Ovary (tissue), 10 donors: ENCODE measurements at regions of chr1 and their contacts with region 1.

Region 1: DNA sequence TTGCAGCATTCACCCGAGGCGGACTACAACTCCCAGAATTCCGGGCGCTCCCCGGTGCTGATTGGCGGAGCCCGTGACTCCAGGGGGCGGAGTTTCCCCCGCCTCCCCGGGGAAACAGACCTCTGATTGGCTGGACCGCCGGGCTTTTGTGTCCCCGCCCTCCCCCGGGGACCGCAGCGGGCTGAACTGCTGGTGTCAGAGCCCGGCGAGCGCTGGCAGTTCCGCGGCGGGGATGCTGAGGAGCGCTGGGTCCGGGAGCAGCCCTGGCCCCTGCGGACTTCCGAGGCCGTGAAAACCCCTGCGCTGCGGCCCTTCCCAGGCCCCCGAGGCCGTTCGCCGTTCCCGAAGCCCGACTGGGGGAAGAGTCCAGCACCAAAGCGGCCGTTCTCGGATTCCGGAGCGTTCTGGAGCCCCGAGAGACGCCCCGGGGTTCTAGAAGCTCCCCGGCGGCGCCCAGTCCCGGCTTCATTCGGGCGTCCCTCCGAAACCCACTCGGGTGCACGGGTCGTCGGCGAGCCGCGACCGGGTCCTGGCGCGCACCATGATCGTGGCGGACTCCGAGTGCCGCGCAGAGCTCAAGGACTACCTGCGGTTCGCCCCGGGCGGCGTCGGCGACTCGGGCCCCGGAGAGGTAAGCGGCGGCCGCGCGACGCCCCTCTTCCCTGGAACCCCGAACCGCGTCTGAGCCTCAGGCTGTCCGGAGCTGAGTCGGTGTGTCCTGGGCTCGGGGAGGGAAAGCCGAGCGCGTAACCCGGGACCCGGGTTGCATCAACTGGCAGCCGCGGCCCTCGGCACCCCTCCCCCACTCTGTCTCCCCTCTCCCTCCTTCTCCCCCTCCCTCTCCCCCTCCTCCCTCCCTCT is at the start of gene SESN2:
- DNase-seq: peak; percentile 99 to 100 (median 99)
- H3K4me3 ChIP-seq: peak within 1 kb of the TSS; percentile 99
- H3K27ac ChIP-seq: peak within 1 kb of the TSS; percentile 85 to 89
- H3K4me1 ChIP-seq: peaks cover 11% of the 10 kb centered on the region
- H3K27me3 ChIP-seq: no peaks in the 10 kb centered on the region
- CTCF ChIP-seq: no peak
- EP300 ChIP-seq: peak; percentile 10
- POLR2A ChIP-seq: peak; percentile 99
- total RNA-seq, gene SESN2: 17.8 to 79.9 (median 29.1) TPM

Region 2: GRCh38 chr1:28064064-28064463 is 195.5 kb before region 1 on chr1:
- intact Hi-C with region 1: no loop called
- DNase-seq: no peak
- H3K4me3 ChIP-seq: no peak overlapping the region
- H3K27ac ChIP-seq: no peak overlapping the region
- H3K4me1 ChIP-seq: no peaks in the 10 kb centered on the region
- H3K27me3 ChIP-seq: no peaks in the 10 kb centered on the region
- CTCF ChIP-seq: no peak
- EP300 ChIP-seq: no peak
- POLR2A ChIP-seq: no peak

Region 3: GRCh38 chr1:28074892-28075511 is 184.5 kb before region 1 on chr1:
- intact Hi-C with region 1: no loop called
- DNase-seq: no peak
- H3K4me3 ChIP-seq: no peak overlapping the region
- H3K27ac ChIP-seq: no peak overlapping the region
- H3K4me1 ChIP-seq: no peaks in the 10 kb centered on the region
- H3K27me3 ChIP-seq: no peaks in the 10 kb centered on the region
- CTCF ChIP-seq: no peak
- EP300 ChIP-seq: no peak
- POLR2A ChIP-seq: no peak

Region 4: DNA sequence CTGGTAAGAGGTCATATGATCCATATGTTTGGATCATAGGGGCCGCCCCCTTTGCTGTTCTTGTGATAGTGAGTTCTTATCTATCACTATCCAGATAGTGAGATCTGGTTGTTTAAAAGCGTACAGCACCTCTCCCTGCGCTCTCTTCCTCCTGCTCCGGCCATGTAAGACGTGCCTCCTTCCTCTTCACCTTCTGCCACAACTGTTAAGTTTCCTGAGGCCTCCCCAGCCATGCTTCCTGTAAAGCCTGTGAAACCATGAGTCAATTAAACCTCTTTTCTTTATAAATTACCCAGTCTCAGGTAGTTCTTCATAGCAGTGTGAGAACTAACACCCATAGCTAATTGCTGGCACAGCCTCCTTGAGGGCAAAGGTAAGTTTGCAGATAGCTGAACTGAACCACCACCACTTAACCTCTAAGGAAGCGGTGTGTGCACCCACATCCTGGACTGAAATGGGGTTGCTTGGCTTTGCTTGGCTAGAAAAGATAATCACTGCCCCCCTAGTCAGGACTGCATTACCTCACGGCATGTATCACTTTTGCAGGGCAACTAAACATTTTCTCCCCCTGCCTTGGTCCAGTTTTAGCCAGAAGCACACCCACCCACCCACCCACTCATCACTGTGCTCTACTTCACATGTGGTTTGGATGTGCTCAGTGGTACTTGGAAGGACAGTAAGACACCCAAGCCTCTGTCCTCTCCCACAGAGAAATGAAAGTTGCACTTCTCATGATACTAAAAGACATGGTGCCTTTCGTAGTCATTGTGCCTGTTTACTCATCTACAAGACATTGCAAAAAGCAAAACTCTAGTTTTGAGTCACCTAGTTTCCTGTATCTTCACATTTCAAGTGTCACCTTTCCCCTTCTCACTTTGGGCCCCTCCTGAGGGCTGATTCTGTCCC is 60.0 kb before region 1 on chr1:
- intact Hi-C with region 1: no loop called
- DNase-seq: no peak
- H3K4me3 ChIP-seq: no peak overlapping the region
- H3K27ac ChIP-seq: no peak overlapping the region
- H3K4me1 ChIP-seq: no peaks in the 10 kb centered on the region
- H3K27me3 ChIP-seq: no peaks in the 10 kb centered on the region
- CTCF ChIP-seq: no peak
- EP300 ChIP-seq: no peak
- POLR2A ChIP-seq: no peak

Region 5: GRCh38 chr1:28282426-28283407 is 23.2 kb after region 1 on chr1:
- intact Hi-C with region 1: loop called in 1 of 4 experiments (anchors 2 kb)
- DNase-seq: no peak
- H3K4me3 ChIP-seq: no peak overlapping the region
- H3K27ac ChIP-seq: no peak overlapping the region
- H3K4me1 ChIP-seq: no peaks in the 10 kb centered on the region
- H3K27me3 ChIP-seq: no peaks in the 10 kb centered on the region
- CTCF ChIP-seq: no peak
- EP300 ChIP-seq: no peak
- POLR2A ChIP-seq: no peak

Region 6: DNA sequence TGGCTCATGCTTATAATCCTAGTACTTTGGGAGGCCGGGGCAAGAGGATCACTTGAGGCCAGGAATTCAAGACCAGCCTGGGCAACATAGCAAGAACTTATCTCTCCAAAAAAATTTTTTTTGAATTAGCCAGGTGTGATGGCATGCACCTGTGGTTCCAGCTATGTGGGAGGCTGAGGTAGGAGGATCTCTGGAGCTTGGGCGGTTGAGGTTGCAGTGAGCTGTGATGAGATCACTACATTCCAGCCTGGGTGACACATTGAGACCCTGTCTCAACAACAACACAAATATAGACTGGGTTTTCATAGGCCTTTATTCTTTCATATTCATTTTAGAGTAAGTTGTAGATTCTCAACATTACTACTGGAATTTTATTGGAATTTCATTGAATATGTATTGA is 82.1 kb after region 1 on chr1:
- intact Hi-C with region 1: loop called in 1 of 4 experiments (anchors 10 kb)
- DNase-seq: no peak
- H3K4me3 ChIP-seq: no peak overlapping the region
- H3K27ac ChIP-seq: no peak overlapping the region
- H3K4me1 ChIP-seq: peaks cover 1% of the 10 kb centered on the region
- H3K27me3 ChIP-seq: no peaks in the 10 kb centered on the region
- CTCF ChIP-seq: no peak
- EP300 ChIP-seq: no peak
- POLR2A ChIP-seq: no peak

Region 7: GRCh38 chr1:28369371-28370238 is 110.1 kb after region 1 on chr1 and contains the start of gene PHACTR4:
- intact Hi-C with region 1: loop called in 1 of 4 experiments (anchors 10 kb)
- DNase-seq: peak; percentile 90 to 93 (median 92)
- H3K4me3 ChIP-seq: peak within 1 kb of the TSS; percentile 77
- H3K27ac ChIP-seq: peak within 1 kb of the TSS; percentile 65 to 90
- H3K4me1 ChIP-seq: peaks cover 6% of the 10 kb centered on the region
- H3K27me3 ChIP-seq: no peaks in the 10 kb centered on the region
- CTCF ChIP-seq: peak in 2 of 3 donors; percentile 14 to 18
- EP300 ChIP-seq: no peak
- POLR2A ChIP-seq: peak; percentile 79
- total RNA-seq, gene PHACTR4: 20.1 to 37.7 (median 31.8) TPM